Ascending aorta (tissue), 2 donors: ENCODE measurements at regions of chr4 and their contacts with region 1.

Region 1: GRCh38 chr4:107824353-107825071 is at the start of gene SGMS2:
- DNase-seq: peak; percentile 76 to 96
- H3K4me3 ChIP-seq: peak within 1 kb of the TSS; percentile 77 to 94
- H3K27ac ChIP-seq: peak within 1 kb of the TSS; percentile 96 to 98
- H3K4me1 ChIP-seq: peaks cover 2 to 3% of the 10 kb centered on the region in 2 donors
- H3K27me3 ChIP-seq: no peaks in the 10 kb centered on the region
- CTCF ChIP-seq: no peak
- total RNA-seq, gene SGMS2: 333 TPM

Region 2: DNA sequence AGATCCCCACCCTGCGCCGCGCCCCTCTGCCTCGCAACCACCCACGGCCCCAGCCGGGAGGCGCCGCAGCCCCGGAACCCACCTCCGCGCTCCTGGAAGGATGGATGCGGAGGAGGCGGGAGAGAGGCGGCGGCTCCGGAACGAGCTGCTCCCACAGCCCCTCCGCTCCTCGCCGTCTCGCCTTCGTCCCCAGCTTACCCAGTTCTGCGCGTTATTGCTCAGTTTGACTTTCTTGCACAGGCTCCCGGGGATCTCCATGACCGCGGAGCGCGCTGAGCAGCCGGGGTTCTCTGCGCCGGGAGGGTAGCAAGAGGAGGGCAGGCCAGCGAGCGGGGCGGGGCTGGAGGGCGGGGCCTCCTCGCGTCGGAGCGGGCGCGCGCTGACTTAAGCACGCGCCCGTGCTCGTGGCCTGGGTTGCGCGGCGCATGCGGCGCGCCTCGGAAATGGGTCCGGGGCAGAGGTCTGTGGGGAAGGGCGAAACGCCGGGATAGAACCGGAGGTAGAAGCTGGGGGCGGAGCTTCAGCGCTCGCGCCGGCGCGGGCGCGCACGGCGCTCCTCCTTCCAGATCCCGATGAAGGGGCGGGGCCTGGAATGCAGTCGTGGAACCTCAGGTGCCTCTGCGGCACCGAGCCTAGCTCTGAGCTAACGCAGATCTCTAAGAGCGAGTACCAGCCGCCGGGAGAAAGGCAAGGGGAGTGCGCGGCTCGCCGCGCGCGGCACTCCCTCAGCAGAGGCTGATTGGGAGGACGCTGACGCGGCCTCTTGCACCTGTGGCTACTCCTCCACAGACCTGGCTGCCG is 104.4 kb before region 1 on chr4 and contains the start of gene PAPSS1:
- intact Hi-C with region 1: loop called (anchors 1 kb)
- DNase-seq: peak; percentile 90 to 98
- H3K4me3 ChIP-seq: peak within 1 kb of the TSS; percentile 67 to 85
- H3K27ac ChIP-seq: peak within 1 kb of the TSS; percentile 90 to 93
- H3K4me1 ChIP-seq: peaks cover 2 to 9% of the 10 kb centered on the region in 2 donors
- H3K27me3 ChIP-seq: no peaks in the 10 kb centered on the region
- CTCF ChIP-seq: no peak
- total RNA-seq, gene PAPSS1: 17.9 TPM

Region 3: DNA sequence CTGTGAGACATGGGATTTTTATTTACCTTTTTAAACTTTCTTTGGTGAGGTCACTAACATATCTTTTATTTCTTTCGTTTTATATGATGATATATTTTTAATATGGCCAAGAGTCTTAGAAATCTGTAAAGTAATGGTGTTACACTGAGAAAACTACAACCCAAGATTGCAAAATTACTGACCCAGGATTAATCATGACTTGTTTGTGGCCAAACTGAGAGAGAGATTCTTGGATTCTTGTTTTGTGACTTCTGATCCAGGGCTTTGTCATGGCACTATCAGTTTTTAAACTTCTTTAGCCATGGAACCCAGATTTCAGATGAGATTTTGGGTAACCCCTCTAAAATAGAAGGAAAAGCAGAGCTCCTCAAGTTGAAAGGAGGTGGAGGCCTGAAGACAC is 42.2 kb after region 1 on chr4:
- intact Hi-C with region 1: loop called (anchors 5 kb)
- DNase-seq: no peak
- H3K4me3 ChIP-seq: no peak overlapping the region
- H3K27ac ChIP-seq: no peak overlapping the region
- H3K4me1 ChIP-seq: peaks cover 0 to under 1% of the 10 kb centered on the region in 2 donors
- H3K27me3 ChIP-seq: no peaks in the 10 kb centered on the region
- CTCF ChIP-seq: no peak

Region 4: GRCh38 chr4:107913281-107913899 is 88.9 kb after region 1 on chr4:
- intact Hi-C with region 1: loop called (anchors 1 kb)
- DNase-seq: peak in 1 of 2 donors; percentile 65
- H3K4me3 ChIP-seq: no peak overlapping the region
- H3K27ac ChIP-seq: no peak overlapping the region
- H3K4me1 ChIP-seq: no peaks in the 10 kb centered on the region
- H3K27me3 ChIP-seq: no peaks in the 10 kb centered on the region
- CTCF ChIP-seq: peak; percentile 68 to 75 (median 72)

Region 5: GRCh38 chr4:107996949-107997788 is 172.7 kb after region 1 on chr4:
- intact Hi-C with region 1: loop called (anchors 5 kb)
- DNase-seq: peak in 1 of 2 donors; percentile 84
- H3K4me3 ChIP-seq: peak overlapping the region in 1 of 2 donors; percentile 25
- H3K27ac ChIP-seq: peak overlapping the region; percentile 92 to 93
- H3K4me1 ChIP-seq: peaks cover 17 to 50% of the 10 kb centered on the region in 2 donors
- H3K27me3 ChIP-seq: no peaks in the 10 kb centered on the region
- CTCF ChIP-seq: no peak

Region 6: GRCh38 chr4:108620101-108620932 is 795.8 kb after region 1 on chr4 and contains the start of gene RPL34:
- intact Hi-C with region 1: loop called (anchors 10 kb)
- DNase-seq: peak; percentile 89 to 99
- H3K4me3 ChIP-seq: peak within 1 kb of the TSS; percentile 66 to 83
- H3K27ac ChIP-seq: peak within 1 kb of the TSS; percentile 82 to 85
- H3K4me1 ChIP-seq: peaks cover 3 to 11% of the 10 kb centered on the region in 2 donors
- H3K27me3 ChIP-seq: no peaks in the 10 kb centered on the region
- CTCF ChIP-seq: no peak
- total RNA-seq, gene RPL34: 571 TPM